ENCODE measurements at regions of chr10 and their contacts with region 1.

Region 1: GRCh38 chr10:103470761-103471653 is 8.0 kb downstream of the CALHM3 start:
- DNase-seq: peak; percentile 95
- ATAC-seq: peak; percentile 80
- H3K4me3 ChIP-seq: peak overlapping the region; percentile 62; the same call in 1 of the 2 replicates
- H3K27ac ChIP-seq: peak overlapping the region; percentile 93
- H3K4me1 ChIP-seq: peaks cover 69% of the 10 kb centered on the region
- H3K27me3 ChIP-seq: no peaks in the 10 kb centered on the region
- CTCF ChIP-seq: no peak
- EP300 ChIP-seq: peak in 1 of 2 experiments; percentile 50; a peak in 1 of 4 replicates
- POLR2A ChIP-seq: peak; percentile 82
- RAD21 ChIP-seq: peak; percentile 10; the same call in 1 of the 2 replicates

Region 2: GRCh38 chr10:103367782-103368518 is 103.1 kb before region 1 on chr10 and contains the start of gene TAF5:
- CTCF ChIA-PET with region 1: interaction called, 3 read pairs
- POLR2A ChIA-PET with region 1: interaction called, 8 read pairs
- RAD21 ChIA-PET with region 1: interaction called, 3 read pairs
- SMC1A ChIA-PET with region 1: interaction called, 4 read pairs
- in situ Hi-C with region 1: no loop called
- intact Hi-C with region 1: loop called (anchors 5 kb)
- DNase-seq: peak; percentile 95
- ATAC-seq: peak; percentile 82
- H3K4me3 ChIP-seq: peak within 1 kb of the TSS; percentile 75
- H3K27ac ChIP-seq: peak within 1 kb of the TSS; percentile 81
- H3K4me1 ChIP-seq: peaks cover 12% of the 10 kb centered on the region
- H3K27me3 ChIP-seq: no peaks in the 10 kb centered on the region
- CTCF ChIP-seq: no peak
- EP300 ChIP-seq: no peak
- POLR2A ChIP-seq: peak; percentile 86
- RAD21 ChIP-seq: no peak
- polyA plus RNA-seq, gene TAF5: 3.7 to 3.8 TPM

Region 3: DNA sequence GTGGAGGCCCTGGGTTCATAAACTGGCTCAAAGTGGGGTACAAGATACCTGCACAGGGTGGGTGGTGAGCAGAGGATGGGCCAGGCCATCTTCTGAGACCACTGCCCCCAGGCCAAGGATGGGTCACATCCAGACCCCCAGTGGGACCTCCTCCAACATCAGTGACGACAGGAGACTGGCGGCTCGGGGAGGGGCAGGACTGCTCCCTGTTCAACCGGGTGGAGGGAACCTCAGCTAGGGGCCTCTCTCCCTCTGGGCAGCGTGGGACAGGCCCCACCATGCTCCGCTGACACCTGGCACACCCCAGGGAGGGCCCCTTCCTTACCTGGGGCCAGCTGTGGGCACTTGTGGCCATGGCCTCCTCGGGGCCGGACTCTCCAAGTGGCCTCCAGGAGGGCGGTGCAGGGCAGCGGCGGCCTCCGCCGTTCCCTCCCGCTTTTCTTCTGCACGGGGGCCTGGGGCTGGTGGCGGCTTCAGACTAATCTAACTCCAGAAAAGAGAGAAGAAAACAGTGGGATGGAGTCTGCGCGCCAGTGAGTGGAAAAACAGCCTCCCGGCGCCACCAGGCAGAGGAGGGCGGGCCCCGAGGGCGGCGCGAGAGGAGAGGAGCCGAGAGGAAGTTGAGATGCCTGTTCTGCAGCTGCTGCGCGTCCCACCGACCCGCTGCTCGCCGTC is 19.0 kb before region 1 on chr10 and contains the start of gene CALHM2:
- CTCF ChIA-PET with region 1: interaction called, 163 read pairs
- POLR2A ChIA-PET with region 1: interaction called, 144 read pairs
- RAD21 ChIA-PET with region 1: interaction called, 73 read pairs
- SMC1A ChIA-PET with region 1: interaction called, 124 read pairs
- in situ Hi-C with region 1: no loop called
- intact Hi-C with region 1: loop called (anchors 1 kb)
- DNase-seq: no peak
- ATAC-seq: peak; percentile 84
- H3K4me3 ChIP-seq: peak within 1 kb of the TSS; percentile 98
- H3K27ac ChIP-seq: peak within 1 kb of the TSS; percentile 83
- H3K4me1 ChIP-seq: peaks cover 22% of the 10 kb centered on the region
- H3K27me3 ChIP-seq: no peaks in the 10 kb centered on the region
- CTCF ChIP-seq: 0 out of 6 replicates have a peak, but pooled peaks of 1 of the 3 experiments have one; percentile 11
- EP300 ChIP-seq: no peak
- POLR2A ChIP-seq: peak; percentile 72
- RAD21 ChIP-seq: 0 out of 2 replicates have a peak, but pooled peaks have one; percentile 2
- polyA plus RNA-seq, gene CALHM2: 0.60 to 1.9 TPM

Region 4: GRCh38 chr10:103458720-103459119 is 12.3 kb before region 1 on chr10 and contains the start of gene CALHM1:
- CTCF ChIA-PET with region 1: interaction called, 163 read pairs
- POLR2A ChIA-PET with region 1: interaction called, 144 read pairs
- RAD21 ChIA-PET with region 1: interaction called, 73 read pairs
- SMC1A ChIA-PET with region 1: interaction called, 124 read pairs
- in situ Hi-C with region 1: no loop called
- intact Hi-C with region 1: no loop called
- DNase-seq: no peak
- ATAC-seq: peak; percentile 93
- H3K4me3 ChIP-seq: no peak within 1 kb of the TSS
- H3K27ac ChIP-seq: no peak within 1 kb of the TSS
- H3K4me1 ChIP-seq: peaks cover 12% of the 10 kb centered on the region
- H3K27me3 ChIP-seq: no peaks in the 10 kb centered on the region
- CTCF ChIP-seq: no peak
- EP300 ChIP-seq: no peak
- POLR2A ChIP-seq: no peak
- RAD21 ChIP-seq: no peak
- polyA plus RNA-seq, gene CALHM1: 0.05 to 0.15 TPM

Region 5: DNA sequence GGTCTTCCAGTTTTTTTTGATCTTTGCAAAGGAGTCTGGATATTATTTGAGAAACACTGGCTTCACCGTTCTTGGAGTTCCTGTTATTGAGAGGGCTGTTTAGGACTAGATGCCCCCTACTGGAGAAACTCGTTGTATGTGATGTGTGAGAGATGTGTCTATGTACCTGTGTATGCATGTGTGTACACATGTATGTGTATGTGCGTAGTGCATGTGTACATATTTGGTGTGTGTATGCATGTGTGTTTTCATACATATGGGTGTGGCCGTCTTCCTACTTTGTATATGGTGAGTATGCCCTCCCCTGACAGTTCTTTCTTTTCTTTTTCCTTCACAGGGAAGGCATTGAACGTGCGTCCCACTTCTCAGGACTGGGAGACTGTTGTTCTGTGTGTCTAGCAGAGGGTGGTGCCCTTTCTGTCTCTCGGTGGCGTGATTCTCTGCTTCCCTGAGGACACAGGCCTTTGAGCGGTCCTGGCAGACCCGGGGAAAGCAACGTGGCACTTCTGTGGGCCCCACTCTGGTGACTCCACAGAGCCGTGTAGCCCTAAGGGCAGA is 11.0 kb after region 1 on chr10:
- CTCF ChIA-PET with region 1: interaction called, 35 read pairs
- POLR2A ChIA-PET with region 1: interaction called, 26 read pairs
- RAD21 ChIA-PET with region 1: interaction called, 14 read pairs
- SMC1A ChIA-PET with region 1: interaction called, 32 read pairs
- in situ Hi-C with region 1: no loop called
- intact Hi-C with region 1: no loop called
- DNase-seq: no peak
- ATAC-seq: peak; percentile 93
- H3K4me3 ChIP-seq: no peak overlapping the region
- H3K27ac ChIP-seq: no peak overlapping the region
- H3K4me1 ChIP-seq: no peaks in the 10 kb centered on the region
- H3K27me3 ChIP-seq: no peaks in the 10 kb centered on the region
- CTCF ChIP-seq: peak; percentile 67 to 82 (median 76)
- EP300 ChIP-seq: no peak
- POLR2A ChIP-seq: no peak
- RAD21 ChIP-seq: peak; percentile 83

Region 6: GRCh38 chr10:103512196-103512990 is 41.4 kb after region 1 on chr10:
- CTCF ChIA-PET with region 1: no interaction called
- POLR2A ChIA-PET with region 1: no interaction called
- RAD21 ChIA-PET with region 1: no interaction called
- SMC1A ChIA-PET with region 1: no interaction called
- in situ Hi-C with region 1: no loop called
- intact Hi-C with region 1: no loop called
- DNase-seq: no peak
- ATAC-seq: no peak
- H3K4me3 ChIP-seq: no peak overlapping the region
- H3K27ac ChIP-seq: no peak overlapping the region
- H3K4me1 ChIP-seq: peaks cover 10% of the 10 kb centered on the region
- H3K27me3 ChIP-seq: peaks cover 0 to 2% of the 10 kb centered on the region in 2 experiments; a peak in 1 of 4 replicates
- CTCF ChIP-seq: no peak
- EP300 ChIP-seq: no peak
- POLR2A ChIP-seq: no peak
- RAD21 ChIP-seq: no peak

Measured in GM12878 (cell line).